Head of caudate nucleus (tissue), 42 donors: ENCODE measurements at regions of chrX and their contacts with region 1.

Region 1: DNA sequence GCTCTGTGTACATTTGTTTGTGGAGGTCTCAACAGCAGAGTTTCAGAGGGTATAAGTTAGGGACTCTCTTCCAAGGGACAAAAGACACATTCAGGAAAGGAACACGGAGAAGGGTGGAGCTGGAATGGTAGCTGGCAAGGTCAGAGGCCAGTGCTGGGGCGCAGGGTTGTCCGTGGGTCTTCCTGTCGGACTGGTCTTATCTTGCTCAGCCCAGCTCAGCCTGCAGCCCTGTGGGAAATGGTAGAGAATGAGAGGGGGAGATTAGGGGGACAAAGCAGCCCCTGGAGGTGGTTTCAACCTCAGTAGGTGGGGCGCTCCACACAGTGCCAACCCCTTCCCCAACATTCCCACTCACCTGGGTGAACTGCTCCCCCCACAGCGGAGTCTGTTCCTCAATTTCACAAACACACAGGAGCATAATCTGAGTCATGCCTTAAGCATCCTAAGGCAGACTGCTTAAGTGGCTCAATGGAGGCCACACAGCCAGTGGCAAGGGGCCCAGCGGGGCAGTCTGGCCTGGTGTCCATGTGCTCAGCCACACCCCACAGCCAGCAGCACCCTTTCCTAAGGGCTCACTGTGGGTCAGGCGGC is 6.9 kb upstream of the HDAC6 start:
- DNase-seq: no peak

Region 2: DNA sequence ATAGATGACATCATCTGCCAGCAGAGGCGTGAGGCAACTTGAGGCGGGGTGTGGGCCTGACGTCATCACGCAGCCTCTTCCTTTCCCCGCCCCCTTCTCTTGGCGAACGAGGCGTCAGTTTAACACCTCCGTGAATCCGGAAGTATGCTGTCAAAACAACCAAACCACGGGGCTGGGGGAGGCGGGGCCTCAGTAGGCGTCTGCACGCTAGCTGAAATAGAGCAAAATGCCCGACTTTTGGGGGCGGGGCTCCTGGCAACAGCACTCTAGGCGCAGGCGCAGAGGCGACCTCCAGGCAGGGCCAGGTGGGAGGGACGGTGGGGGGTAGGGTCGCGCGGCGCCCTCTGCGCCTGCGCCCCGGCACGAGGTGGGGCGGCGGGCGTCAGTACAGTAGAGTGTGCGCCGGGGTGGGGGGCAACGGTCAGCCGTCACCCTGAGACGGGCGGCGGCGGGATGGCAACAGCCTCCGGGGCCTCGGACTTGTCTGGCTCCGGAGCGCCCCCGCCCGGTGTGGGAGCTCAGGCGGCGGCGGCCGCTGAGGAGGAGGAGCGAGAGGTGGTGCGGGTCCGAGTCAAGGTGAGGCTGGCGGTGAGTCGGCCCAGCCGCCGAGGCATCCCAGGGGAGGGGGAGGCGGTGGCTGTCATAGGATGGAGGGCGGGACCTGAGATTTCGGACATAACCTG is 255.5 kb before region 1 on chrX and contains the start of gene TBC1D25:
- intact Hi-C with region 1: loop called (anchors 5 kb)
- DNase-seq: peak; percentile 87 to 98 (median 94)

Region 3: DNA sequence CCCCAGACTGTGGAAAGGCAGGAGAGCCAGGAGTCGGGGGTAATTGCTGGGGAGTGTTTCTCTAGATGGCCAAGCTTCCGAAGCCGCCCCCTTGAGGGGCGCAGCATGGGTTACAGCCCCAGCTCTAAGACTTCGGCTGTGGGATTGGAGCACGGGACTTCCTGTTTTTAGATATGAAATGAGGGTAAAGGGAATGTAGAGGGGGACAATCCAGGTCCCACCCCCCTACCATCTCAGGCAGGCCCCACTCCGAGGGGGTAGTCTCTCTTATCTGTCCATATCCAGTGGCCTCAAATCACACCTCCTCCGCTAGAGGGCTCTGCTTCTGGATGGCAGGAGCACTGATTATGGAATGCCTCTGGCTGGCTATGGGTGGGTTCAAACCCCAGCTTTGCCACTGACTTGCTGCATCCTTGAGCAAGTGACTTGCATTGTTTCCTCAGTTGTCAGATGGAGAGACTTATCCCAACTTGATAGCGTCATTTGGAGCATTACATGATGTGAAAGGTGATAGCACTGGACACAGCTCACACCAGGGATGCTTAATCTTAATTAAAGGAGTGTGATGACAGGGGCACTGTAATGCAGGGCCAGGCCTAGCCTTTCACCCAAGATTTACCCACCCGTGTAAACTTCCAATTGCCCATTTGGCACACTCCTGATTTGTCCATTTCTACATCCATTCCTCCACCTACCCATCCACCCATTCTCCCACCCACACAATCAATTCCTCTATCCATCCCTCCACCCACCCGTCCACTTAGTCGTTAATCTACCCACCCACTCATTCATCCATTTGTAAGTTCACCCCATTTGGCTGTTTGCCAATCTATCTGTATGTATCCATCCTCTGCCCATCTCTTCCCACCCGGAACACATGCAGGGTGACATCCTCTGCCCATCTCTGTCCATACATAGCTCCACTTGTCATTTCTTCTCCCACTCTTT is 177.5 kb after region 1 on chrX:
- intact Hi-C with region 1: no loop called
- DNase-seq: peak in 32 of 42 donors; percentile 10 to 65 (median 38)

Region 4: DNA sequence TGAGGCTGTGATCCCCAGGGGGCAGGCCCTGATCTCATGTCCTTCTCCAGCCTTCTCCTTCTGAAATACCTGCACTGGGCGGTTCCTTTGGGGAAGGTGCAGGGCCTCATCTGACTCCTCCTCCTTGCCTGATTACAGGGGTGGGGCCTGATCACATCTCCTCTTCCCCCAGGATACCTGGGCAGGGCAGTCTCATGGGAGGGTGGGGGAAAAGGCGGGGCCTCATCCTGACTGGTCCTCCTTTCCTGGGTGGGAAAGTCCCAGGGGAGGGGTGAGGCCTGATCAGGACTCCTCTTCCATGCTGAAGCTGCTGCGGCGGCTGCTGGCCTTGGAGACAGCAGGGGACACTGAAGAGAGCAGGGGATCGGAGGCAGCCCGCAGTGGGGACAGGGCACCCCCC is 234.9 kb after region 1 on chrX:
- intact Hi-C with region 1: no loop called
- DNase-seq: peak in 2 of 42 donors; percentile 8 to 17